ENCODE measurements at regions of chr10 and their contacts with region 1.

Region 1: DNA sequence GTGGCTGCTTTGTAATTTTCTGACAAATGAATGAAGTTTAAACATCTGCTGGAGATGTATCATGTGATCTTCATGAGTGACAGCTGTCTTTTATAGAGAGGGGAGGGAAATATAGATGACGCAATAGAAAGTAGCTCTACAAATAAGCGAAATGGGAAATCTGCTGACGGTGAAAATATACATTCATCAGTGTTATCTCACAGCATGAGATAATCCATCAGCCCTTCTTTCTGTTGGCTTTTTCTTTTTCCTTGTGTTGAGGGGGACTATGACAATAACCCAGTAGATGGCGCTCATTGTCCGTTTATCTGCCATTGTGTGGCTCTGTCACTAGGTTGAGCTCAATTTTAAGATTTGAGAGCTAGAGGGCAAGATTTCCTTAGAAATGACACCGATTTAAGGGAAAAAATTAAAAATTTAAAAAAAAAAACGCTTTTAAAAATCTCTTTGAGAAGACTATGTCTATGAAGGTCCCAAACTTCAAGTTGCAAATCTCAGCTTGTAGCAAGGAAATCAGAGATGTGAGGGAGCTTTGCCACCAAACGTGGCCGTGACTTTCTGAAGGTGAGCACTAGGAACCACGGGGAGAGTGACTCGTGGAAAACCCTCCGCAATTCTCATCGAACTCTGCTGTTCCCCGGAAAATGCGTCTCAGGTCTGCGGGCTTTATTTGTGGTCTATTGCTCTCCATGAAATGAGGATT is 114.6 kb upstream of the SFMBT2 start:
- DNase-seq: peak; percentile 83
- H3K4me3 Mint-ChIP-seq: no peak overlapping the region
- H3K27ac Mint-ChIP-seq: no peak overlapping the region
- H3K4me1 Mint-ChIP-seq: peaks cover 4% of the 10 kb centered on the region
- H3K27me3 Mint-ChIP-seq: no peaks in the 10 kb centered on the region

Region 2: GRCh38 chr10:7435674-7436073 is 89.8 kb before region 1 on chr10:
- CTCF ChIA-PET with region 1: no interaction called
- intact Hi-C with region 1: no loop called
- DNase-seq: no peak
- H3K4me3 Mint-ChIP-seq: no peak overlapping the region
- H3K27ac Mint-ChIP-seq: no peak overlapping the region
- H3K4me1 Mint-ChIP-seq: peaks cover 7% of the 10 kb centered on the region
- H3K27me3 Mint-ChIP-seq: no peaks in the 10 kb centered on the region

Region 3: GRCh38 chr10:7538970-7539667 is 13.7 kb after region 1 on chr10:
- CTCF ChIA-PET with region 1: interaction called, 17 read pairs
- intact Hi-C with region 1: no loop called
- DNase-seq: no peak
- H3K4me3 Mint-ChIP-seq: no peak overlapping the region
- H3K27ac Mint-ChIP-seq: no peak overlapping the region
- H3K4me1 Mint-ChIP-seq: peaks cover 12% of the 10 kb centered on the region
- H3K27me3 Mint-ChIP-seq: no peaks in the 10 kb centered on the region

Region 4: GRCh38 chr10:7622969-7623368 is 97.5 kb after region 1 on chr10:
- CTCF ChIA-PET with region 1: interaction called, 3 read pairs
- intact Hi-C with region 1: loop called (anchors 5 kb)
- DNase-seq: peak; percentile 27
- H3K4me3 Mint-ChIP-seq: no peak overlapping the region
- H3K27ac Mint-ChIP-seq: no peak overlapping the region
- H3K4me1 Mint-ChIP-seq: no peaks in the 10 kb centered on the region
- H3K27me3 Mint-ChIP-seq: no peaks in the 10 kb centered on the region

Region 5: DNA sequence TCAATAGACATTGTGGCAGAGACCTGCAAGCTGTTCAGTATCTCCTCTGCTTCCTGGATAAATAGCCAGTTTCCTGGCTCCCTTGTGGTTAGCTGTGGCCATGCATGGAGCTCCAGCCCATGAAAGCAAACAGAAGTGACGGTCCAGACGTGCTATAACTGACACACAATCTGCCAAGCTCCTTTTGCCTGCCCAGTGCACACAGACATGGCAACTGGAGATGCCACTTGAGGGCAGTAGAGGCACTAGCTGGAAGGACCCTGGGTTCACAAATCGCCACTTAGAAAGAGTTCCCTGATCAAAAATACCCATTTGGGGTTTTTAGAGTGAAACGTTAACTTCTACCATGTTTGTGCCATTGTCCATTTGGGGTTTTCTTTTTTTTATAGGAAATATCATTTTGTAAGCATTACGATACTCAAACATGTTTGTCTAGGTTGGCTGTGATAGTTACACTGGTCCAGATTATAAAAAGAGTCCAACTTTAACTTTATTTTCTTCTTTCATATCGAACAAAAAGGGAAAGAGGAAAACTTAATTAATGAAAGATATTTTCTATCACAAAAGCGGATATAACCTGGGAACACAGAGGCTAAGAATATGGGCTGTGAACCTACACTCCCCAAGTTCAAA is 231.0 kb after region 1 on chr10:
- CTCF ChIA-PET with region 1: interaction called, 3 read pairs
- intact Hi-C with region 1: loop called (anchors 10 kb)
- DNase-seq: peak; percentile 39
- H3K4me3 Mint-ChIP-seq: no peak overlapping the region
- H3K27ac Mint-ChIP-seq: no peak overlapping the region
- H3K4me1 Mint-ChIP-seq: no peaks in the 10 kb centered on the region
- H3K27me3 Mint-ChIP-seq: no peaks in the 10 kb centered on the region

Region 6: GRCh38 chr10:9302120-9302746 is 1776.8 kb after region 1 on chr10:
- CTCF ChIA-PET with region 1: no interaction called
- intact Hi-C with region 1: loop called (anchors 1 kb)
- DNase-seq: peak; percentile 25
- H3K4me3 Mint-ChIP-seq: no peak overlapping the region
- H3K27ac Mint-ChIP-seq: no peak overlapping the region
- H3K4me1 Mint-ChIP-seq: no peaks in the 10 kb centered on the region
- H3K27me3 Mint-ChIP-seq: no peaks in the 10 kb centered on the region

Measured in activated naive CD4-positive, alpha-beta T cell treated with anti-CD3 and anti-CD28 coated beads for 36 hours (primary cell).